ENCODE measurements at regions of chr5 and their contacts with region 1.

Region 1: GRCh38 chr5:151252762-151253604 is at the start of gene GM2A:
- DNase-seq: peak; percentile 100
- H3K4me3 ChIP-seq: peak within 1 kb of the TSS; percentile 64 to 92 (median 76)
- H3K27ac ChIP-seq: peak within 1 kb of the TSS; percentile 70
- H3K4me1 ChIP-seq: peaks cover 24% of the 10 kb centered on the region
- H3K27me3 ChIP-seq: no peaks in the 10 kb centered on the region
- CTCF ChIP-seq: no peak
- total RNA-seq, gene GM2A: 114 to 138 TPM

Region 2: GRCh38 chr5:151075698-151076331 is 177.2 kb before region 1 on chr5:
- CTCF ChIA-PET with region 1: no interaction called
- dilution Hi-C with region 1: no loop called
- in situ Hi-C with region 1: no loop called
- intact Hi-C with region 1: loop called (anchors 1 kb)
- DNase-seq: peak; percentile 93
- H3K4me3 ChIP-seq: no peak overlapping the region
- H3K27ac ChIP-seq: peak overlapping the region; percentile 75
- H3K4me1 ChIP-seq: peaks cover 58% of the 10 kb centered on the region
- H3K27me3 ChIP-seq: no peaks in the 10 kb centered on the region
- CTCF ChIP-seq: no peak

Region 3: GRCh38 chr5:151274670-151275069 is 21.7 kb after region 1 on chr5:
- CTCF ChIA-PET with region 1: interaction called, 10 read pairs
- dilution Hi-C with region 1: no loop called
- in situ Hi-C with region 1: no loop called
- intact Hi-C with region 1: no loop called
- DNase-seq: no peak
- H3K4me3 ChIP-seq: no peak overlapping the region
- H3K27ac ChIP-seq: no peak overlapping the region
- H3K4me1 ChIP-seq: no peaks in the 10 kb centered on the region
- H3K27me3 ChIP-seq: no peaks in the 10 kb centered on the region
- CTCF ChIP-seq: no peak

Region 4: GRCh38 chr5:151298063-151298855 is 45.3 kb after region 1 on chr5:
- CTCF ChIA-PET with region 1: no interaction called
- dilution Hi-C with region 1: loop called (anchors 5 kb)
- in situ Hi-C with region 1: no loop called
- intact Hi-C with region 1: loop called (anchors 5 kb)
- DNase-seq: peak; percentile 57
- H3K4me3 ChIP-seq: no peak overlapping the region
- H3K27ac ChIP-seq: no peak overlapping the region
- H3K4me1 ChIP-seq: peaks cover 18% of the 10 kb centered on the region
- H3K27me3 ChIP-seq: no peaks in the 10 kb centered on the region
- CTCF ChIP-seq: peak; percentile 61 to 71